ENCODE measurements at regions of chr15 and their contacts with region 1.

Region 1: GRCh38 chr15:38699633-38700230 is 135.1 kb upstream of the RASGRP1 start:
- DNase-seq: peak; percentile 76
- H3K4me3 ChIP-seq: no peak overlapping the region
- H3K27ac ChIP-seq: no peak overlapping the region
- H3K4me1 ChIP-seq: peaks cover 6 to 23% (median 15%) of the 10 kb centered on the region in 4 donors
- H3K27me3 ChIP-seq: no peaks in the 10 kb centered on the region
- CTCF ChIP-seq: peak; percentile 76 to 86 (median 81)
- EP300 ChIP-seq: no peak
- POLR2A ChIP-seq: no peak

Region 2: DNA sequence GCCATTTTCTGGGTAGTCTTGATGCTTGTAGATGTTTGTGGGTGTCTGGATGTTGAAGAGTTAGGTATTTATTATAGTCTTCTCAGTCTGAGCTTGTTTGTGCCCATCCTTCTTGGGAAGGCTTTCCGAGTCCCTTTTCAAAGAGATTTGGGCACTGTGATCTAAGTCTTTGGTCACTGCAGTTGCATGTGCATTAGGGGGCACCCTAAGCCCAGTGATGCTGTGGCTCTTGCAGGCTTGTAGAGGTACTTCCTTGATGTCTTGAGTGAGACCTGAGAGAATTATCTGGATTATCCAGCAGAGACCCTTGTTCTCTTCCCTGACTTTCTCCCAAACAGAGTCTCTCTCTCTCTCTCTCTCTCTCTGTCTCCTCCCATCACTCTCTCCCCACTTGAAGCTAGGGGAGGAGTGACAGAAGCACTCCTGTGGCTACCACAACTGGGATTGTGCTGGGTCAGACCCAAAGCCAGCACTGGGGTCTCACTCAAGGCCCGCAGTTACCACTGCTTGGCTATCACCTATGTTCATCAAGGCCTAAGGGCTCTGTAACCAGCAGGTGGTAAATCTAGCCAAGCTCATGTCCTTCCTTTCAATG is 696.8 kb before region 1 on chr15:
- in situ Hi-C with region 1: loop called in 3 of 4 experiments (anchors 10 to 25 kb)
- intact Hi-C with region 1: no loop called
- DNase-seq: peak; percentile 71
- H3K4me3 ChIP-seq: no peak overlapping the region
- H3K27ac ChIP-seq: no peak overlapping the region
- H3K4me1 ChIP-seq: peaks cover 0 to 9% (median 0%) of the 10 kb centered on the region in 4 donors
- H3K27me3 ChIP-seq: no peaks in the 10 kb centered on the region
- CTCF ChIP-seq: peak; percentile 56 to 73 (median 57)
- EP300 ChIP-seq: no peak
- POLR2A ChIP-seq: no peak

Region 3: DNA sequence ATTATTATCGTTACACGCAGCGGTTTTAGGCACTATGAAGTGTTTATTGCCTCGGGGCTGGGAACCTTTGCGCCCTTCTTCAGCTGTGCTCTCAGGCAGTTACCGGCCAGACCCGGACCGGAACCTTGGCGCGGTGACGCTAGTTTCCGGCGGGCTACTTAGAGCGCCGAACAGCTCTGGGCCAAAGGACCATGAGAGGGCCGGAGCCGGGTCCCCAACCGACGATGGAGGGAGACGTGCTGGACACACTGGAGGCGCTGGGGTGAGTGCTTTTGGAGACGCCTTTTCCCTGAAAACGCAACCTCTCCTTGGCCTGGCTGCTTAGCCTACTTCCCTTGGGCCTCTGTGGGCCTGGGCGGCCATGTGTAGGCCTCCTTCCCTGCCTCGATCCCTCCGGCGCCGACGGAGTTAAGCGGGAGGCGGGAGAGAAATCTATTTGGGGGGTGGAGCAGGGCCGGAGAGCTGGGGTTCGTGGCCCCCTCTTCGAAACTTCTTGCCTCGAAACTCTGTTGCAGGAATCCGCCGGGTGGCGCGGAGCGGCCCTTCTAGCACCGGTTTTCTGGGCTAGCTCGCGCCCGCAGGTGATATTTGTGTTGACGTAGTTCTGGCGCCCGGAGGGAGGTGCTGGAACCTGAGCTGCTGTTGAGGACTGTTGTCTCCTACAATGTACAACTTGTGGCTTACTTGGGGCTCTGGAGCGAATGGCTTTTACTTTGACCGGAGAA is 245.6 kb before region 1 on chr15 and contains the start of gene FAM98B:
- in situ Hi-C with region 1: loop called in 2 of 4 experiments (anchors 25 kb)
- intact Hi-C with region 1: no loop called
- DNase-seq: peak; percentile 92
- H3K4me3 ChIP-seq: peak within 1 kb of the TSS; percentile 74 to 92 (median 83)
- H3K27ac ChIP-seq: peak within 1 kb of the TSS; percentile 93 to 94 (median 93)
- H3K4me1 ChIP-seq: peaks cover 11 to 16% (median 15%) of the 10 kb centered on the region in 4 donors
- H3K27me3 ChIP-seq: no peaks in the 10 kb centered on the region
- CTCF ChIP-seq: peak in 2 of 5 experiments; percentile 5 to 14
- EP300 ChIP-seq: no peak
- POLR2A ChIP-seq: peak; percentile 46
- total RNA-seq, gene FAM98B: 5.2 to 12.2 (median 7.6) TPM

Region 4: GRCh38 chr15:38563723-38564519 is 135.8 kb before region 1 on chr15:
- in situ Hi-C with region 1: loop called in 1 of 4 experiments (anchors 10 kb)
- intact Hi-C with region 1: no loop called
- DNase-seq: peak; percentile 79
- H3K4me3 ChIP-seq: peak overlapping the region; percentile 53 to 85 (median 58)
- H3K27ac ChIP-seq: peak overlapping the region; percentile 62 to 72 (median 70)
- H3K4me1 ChIP-seq: peaks cover 0 to 13% (median 7%) of the 10 kb centered on the region in 4 donors
- H3K27me3 ChIP-seq: peaks cover 19% of the 10 kb centered on the region
- CTCF ChIP-seq: peak; percentile 76 to 95 (median 88)
- EP300 ChIP-seq: no peak
- POLR2A ChIP-seq: no peak

Region 5: DNA sequence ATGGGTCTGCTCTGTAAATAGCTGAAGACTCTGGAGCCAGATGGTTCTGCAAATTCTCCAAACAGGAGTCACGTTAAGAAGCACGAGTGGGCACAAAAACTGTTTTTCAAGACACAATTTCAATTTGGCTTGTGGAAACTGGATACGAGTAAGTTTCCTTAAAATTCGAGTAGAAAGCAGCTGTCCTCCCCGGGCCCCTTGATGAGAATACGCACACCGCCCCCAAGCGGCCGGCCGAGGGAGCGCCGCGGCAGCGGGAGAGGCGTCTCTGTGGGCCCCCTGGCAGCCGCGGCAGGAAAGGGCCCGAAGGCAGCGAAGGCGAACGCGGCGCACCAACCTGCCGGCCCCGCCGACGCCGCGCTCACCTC is 880.4 kb after region 1 on chr15:
- in situ Hi-C with region 1: loop called (anchors 10 to 25 kb)
- intact Hi-C with region 1: no loop called
- DNase-seq: peak; percentile 95
- H3K4me3 ChIP-seq: peak overlapping the region; percentile 55 to 83 (median 57)
- H3K27ac ChIP-seq: peak overlapping the region; percentile 86 to 97 (median 95)
- H3K4me1 ChIP-seq: peaks cover under 1 to 51% (median 36%) of the 10 kb centered on the region in 4 donors
- H3K27me3 ChIP-seq: no peaks in the 10 kb centered on the region
- CTCF ChIP-seq: peak; percentile 95 to 100 (median 98)
- EP300 ChIP-seq: no peak
- POLR2A ChIP-seq: no peak

Region 6: DNA sequence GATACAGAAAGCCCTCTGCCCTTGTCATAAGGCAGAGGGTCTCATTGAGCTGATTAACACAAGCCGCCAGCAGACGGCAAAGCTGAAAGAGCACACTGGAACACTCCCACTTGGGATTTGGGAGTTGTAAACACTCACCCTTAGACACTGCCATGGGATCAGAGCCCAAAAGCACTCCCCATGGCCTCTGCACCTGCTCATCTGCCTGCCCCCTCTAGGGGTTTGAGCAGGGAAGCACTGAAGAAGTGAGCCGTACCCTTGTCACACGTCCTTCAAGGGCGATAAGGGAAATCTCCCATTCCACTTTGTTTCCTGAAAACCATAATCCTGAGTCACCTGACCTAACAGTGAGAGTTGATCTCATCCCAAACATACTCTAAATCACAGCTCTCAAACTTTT is 1068.2 kb after region 1 on chr15:
- in situ Hi-C with region 1: loop called (anchors 25 kb)
- intact Hi-C with region 1: loop called (anchors 10 kb)
- DNase-seq: no peak
- H3K4me3 ChIP-seq: no peak overlapping the region
- H3K27ac ChIP-seq: no peak overlapping the region
- H3K4me1 ChIP-seq: peaks cover 0 to 9% (median 7%) of the 10 kb centered on the region in 4 donors
- H3K27me3 ChIP-seq: no peaks in the 10 kb centered on the region
- CTCF ChIP-seq: no peak
- EP300 ChIP-seq: no peak
- POLR2A ChIP-seq: no peak